OCI-LY7 (cell line): ENCODE measurements at regions of chr10 and their contacts with region 1.

Region 1: DNA sequence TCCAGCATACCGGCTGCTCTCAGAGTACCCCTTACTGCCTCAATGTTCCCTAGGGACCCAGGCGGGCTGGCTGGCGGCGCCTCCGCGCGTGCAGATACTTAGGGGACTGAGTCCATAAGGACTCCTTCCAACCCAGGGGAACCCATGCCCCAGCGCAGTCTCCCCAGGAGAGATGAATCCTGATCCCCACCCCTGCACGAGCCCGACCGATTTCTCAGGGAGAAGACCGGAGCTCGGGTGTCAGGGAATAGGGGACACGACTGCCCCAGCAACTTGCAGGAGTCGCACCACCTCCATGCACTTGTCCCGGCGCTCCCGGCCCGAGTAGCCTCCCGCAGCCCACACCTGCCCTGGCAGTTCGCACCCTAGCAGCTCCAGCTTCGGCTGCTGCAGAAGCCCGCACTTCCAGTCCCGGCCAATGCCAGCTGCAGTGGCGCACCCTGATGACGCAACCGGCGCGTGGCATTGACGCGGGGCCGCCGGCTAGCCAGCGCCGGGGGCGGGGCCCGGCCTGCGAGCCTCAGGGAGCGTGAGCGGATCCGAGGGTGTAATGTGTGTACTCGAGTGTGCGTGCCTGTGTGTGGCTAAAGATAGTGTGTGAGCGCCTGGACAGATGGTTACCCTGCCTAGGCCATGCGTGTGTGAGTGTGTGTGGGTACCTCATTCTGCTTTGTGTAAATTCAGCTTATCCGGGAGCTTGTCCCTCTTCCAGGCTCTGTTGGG is at the start of gene GPAM:
- DNase-seq: peak; percentile 94
- H3K4me3 ChIP-seq: peak within 1 kb of the TSS; percentile 94
- H3K27ac ChIP-seq: no peak within 1 kb of the TSS
- H3K4me1 ChIP-seq: peaks cover 17% of the 10 kb centered on the region
- CTCF ChIP-seq: no peak
- total RNA-seq, gene GPAM: 6.9 and 7.5 TPM in 2 replicates

Region 2: GRCh38 chr10:112173206-112173605 is 10.3 kb before region 1 on chr10:
- CTCF ChIA-PET with region 1: interaction called, 3 read pairs
- POLR2A ChIA-PET with region 1: interaction called, 28 read pairs
- intact Hi-C with region 1: no loop called
- DNase-seq: no peak
- H3K4me3 ChIP-seq: no peak overlapping the region
- H3K27ac ChIP-seq: no peak overlapping the region
- H3K4me1 ChIP-seq: no peaks in the 10 kb centered on the region
- CTCF ChIP-seq: no peak

Region 3: GRCh38 chr10:112389147-112389822 is 205.8 kb after region 1 on chr10:
- CTCF ChIA-PET with region 1: no interaction called
- POLR2A ChIA-PET with region 1: no interaction called
- intact Hi-C with region 1: no loop called
- DNase-seq: peak; percentile 17
- H3K4me3 ChIP-seq: no peak overlapping the region
- H3K27ac ChIP-seq: no peak overlapping the region
- H3K4me1 ChIP-seq: peaks cover 8% of the 10 kb centered on the region
- CTCF ChIP-seq: no peak

Region 4: DNA sequence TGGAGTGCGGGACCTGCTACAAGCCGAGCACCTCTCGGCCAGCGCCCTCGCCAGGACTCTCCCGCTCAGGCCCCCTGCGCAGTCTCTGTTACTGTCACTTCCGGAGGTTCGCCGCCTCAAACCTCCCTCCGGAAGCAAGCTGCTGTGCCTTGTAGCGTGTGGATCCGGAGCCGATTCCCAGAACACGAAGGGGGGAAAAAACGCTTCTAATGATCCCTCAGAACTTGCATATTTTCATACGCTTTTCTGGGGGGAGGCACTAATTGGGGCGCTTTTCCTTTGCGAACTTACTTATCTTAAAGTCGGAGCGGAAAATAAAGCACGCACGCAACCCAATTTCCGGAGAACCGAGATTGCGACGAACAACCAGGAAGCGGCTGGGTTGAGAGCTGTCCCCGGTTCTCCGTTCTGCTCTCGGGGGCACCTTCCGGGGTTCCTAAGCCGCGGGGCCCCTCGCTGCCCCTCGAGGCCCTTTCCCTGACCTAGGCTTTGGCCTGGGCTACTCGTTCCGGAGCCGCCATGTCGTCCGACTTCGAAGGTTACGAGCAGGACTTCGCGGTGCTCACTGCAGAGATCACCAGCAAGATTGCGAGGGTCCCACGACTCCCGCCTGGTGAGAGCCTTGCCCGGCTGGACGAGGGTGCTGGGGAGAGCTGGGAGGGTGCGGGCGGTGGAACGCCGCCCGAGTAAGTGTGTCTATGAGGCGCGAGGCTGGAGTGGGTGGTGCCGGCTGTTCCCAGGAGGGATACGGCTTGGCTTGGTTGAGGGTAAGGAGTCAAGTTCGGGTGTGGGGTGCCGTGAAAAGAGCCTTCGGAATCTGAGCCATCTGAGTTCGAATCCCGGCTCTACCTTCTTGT is 263.6 kb after region 1 on chr10 and contains the starts of genes VTI1A and ZDHHC6:
- CTCF ChIA-PET with region 1: no interaction called
- POLR2A ChIA-PET with region 1: interaction called, 3 read pairs
- intact Hi-C with region 1: loop called (anchors 5 kb)
- DNase-seq: peak; percentile 88
- H3K4me3 ChIP-seq: peak within 1 kb of the TSS; percentile 100
- H3K27ac ChIP-seq: peak within 1 kb of the TSS; percentile 59
- H3K4me1 ChIP-seq: peaks cover 30% of the 10 kb centered on the region
- CTCF ChIP-seq: peak; percentile 42
- total RNA-seq, gene VTI1A: 39.4 and 70.8 TPM in 2 replicates
- total RNA-seq, gene ZDHHC6: 29.9 and 31.5 TPM in 2 replicates

Region 5: DNA sequence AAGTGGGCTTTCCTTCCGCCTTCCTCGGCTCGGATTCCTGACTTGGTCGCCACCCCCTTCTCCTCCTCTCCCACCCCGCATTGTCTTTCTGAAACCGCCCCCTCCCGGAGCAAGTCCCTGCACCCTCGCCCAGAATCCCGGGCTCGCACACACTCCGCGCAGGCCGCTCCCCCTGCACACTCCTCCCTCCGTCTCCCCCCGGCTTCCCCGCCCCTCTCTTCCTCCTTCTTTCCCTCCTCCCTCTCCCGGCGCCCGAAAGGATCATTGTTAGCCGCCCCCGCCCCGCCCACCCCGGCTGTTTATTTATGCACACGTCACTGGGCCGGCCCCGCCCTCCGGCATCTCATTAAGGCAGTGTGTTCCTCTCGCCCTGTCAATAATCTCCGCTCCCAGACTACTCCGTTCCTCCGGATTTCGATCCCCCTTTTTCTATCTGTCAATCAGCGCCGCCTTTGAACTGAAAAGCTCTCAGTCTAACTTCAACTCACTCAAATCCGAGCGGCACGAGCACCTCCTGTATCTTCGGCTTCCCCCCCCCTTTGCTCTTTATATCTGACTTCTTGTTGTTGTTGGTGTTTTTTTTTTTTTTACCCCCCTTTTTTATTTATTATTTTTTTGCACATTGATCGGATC is 766.5 kb after region 1 on chr10 and contains the start of gene TCF7L2:
- CTCF ChIA-PET with region 1: no interaction called
- POLR2A ChIA-PET with region 1: no interaction called
- intact Hi-C with region 1: loop called (anchors 5 kb)
- DNase-seq: peak; percentile 86
- H3K4me3 ChIP-seq: peak within 1 kb of the TSS; percentile 75
- H3K27ac ChIP-seq: peak within 1 kb of the TSS; percentile 44
- H3K4me1 ChIP-seq: peaks cover 13% of the 10 kb centered on the region
- CTCF ChIP-seq: no peak
- total RNA-seq, gene TCF7L2: 1.3 and 2.8 TPM in 2 replicates